ENCODE measurements at regions of chr22 and their contacts with region 1.

Region 1: GRCh38 chr22:49930739-49931412 is 12.4 kb downstream of the CRELD2 start:
- DNase-seq: no peak
- ATAC-seq: peak; percentile 48

Region 2: DNA sequence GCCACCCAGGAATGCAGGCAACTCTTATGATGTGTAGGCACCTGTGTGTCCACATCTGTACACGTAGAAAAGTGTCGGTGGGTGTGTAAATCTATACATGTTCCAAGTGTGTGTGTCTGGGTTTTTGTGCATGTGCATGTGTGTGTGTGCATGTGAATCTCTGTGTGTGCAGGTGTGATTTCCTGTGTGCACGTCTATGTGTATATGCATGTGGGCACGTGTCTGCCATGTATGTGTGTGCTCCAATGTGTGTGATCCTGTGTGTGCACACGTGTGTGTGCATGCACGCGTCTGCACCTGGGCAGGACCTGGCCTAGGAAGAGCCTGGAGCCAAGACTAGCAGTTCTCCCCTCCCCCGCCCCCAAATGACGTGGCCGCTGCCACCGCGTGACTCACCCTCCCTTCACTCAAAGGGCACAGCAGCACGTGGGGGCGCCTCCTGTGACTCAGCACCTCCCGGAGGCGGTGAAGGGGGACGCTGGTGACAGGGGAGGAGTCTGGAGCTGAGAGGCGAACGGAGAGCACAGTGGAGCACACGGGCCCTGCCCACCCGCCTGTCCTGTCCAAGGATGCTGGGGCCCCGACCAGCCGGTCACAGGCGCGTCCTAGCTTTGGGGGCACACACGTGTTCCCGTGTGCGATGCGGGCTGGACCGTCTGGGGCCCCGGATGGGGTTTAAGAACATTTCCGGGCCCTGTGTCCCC is 39.8 kb after region 1 on chr22:
- intact Hi-C with region 1: loop called (anchors 5 kb)
- DNase-seq: peak; percentile 96
- ATAC-seq: peak; percentile 89

Region 3: GRCh38 chr22:49992921-49993648 is 62.2 kb after region 1 on chr22:
- intact Hi-C with region 1: loop called (anchors 1 kb)
- DNase-seq: peak; percentile 90
- ATAC-seq: peak; percentile 78

Region 4: GRCh38 chr22:50030297-50031188 is 99.7 kb after region 1 on chr22:
- intact Hi-C with region 1: loop called (anchors 1 kb)
- DNase-seq: peak; percentile 90
- ATAC-seq: peak; percentile 83